IMR-90 (cell line): ENCODE measurements at regions of chr1 and their contacts with region 1.

Region 1: DNA sequence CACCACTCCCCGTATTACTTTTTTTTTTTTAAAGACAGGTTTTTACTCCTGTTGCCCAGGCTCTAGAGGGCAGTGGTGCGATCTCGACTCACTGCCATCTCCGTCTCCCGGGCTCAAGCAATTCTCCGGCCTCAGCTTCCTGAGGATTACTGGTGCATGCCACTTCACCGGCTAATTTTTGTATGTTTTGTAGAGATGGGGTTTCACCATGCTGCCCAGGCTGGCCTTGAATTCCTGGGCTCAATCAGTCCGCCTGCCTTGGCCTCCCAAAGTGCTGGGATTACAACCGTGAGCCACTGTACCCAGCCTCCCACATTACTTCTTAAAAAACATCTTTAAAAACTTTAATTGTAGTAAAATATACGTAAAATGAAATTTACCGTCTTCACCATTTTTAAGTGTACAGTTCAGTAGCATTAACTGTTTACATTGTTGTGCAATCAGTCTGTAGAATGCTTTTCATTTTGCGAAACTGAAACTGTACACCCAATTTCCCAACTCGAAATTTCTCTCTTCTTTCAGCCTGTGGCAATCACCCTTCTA is 77.0 kb downstream of the ZMYM4 start:
- DNase-seq: peak; percentile 40
- ATAC-seq: no peak
- H3K4me3 ChIP-seq: no peak overlapping the region
- H3K27ac ChIP-seq: no peak overlapping the region
- H3K4me1 ChIP-seq: no peaks in the 10 kb centered on the region
- H3K27me3 ChIP-seq: no peaks in the 10 kb centered on the region
- CTCF ChIP-seq: no peak
- POLR2A ChIP-seq: no peak
- RAD21 ChIP-seq: no peak

Region 2: GRCh38 chr1:35215346-35215745 is 130.2 kb before region 1 on chr1:
- CTCF ChIA-PET with region 1: no interaction called
- POLR2A ChIA-PET with region 1: no interaction called
- dilution Hi-C with region 1: no loop called
- in situ Hi-C with region 1: no loop called
- intact Hi-C with region 1: loop called (anchors 5 kb)
- DNase-seq: no peak
- ATAC-seq: no peak
- H3K4me3 ChIP-seq: no peak overlapping the region
- H3K27ac ChIP-seq: no peak overlapping the region
- H3K4me1 ChIP-seq: no peaks in the 10 kb centered on the region; the same call in 1 of the 2 replicates
- H3K27me3 ChIP-seq: no peaks in the 10 kb centered on the region
- CTCF ChIP-seq: no peak
- POLR2A ChIP-seq: no peak
- RAD21 ChIP-seq: no peak

Region 3: GRCh38 chr1:35268282-35269200 is 77.0 kb before region 1 on chr1 and contains the start of gene ZMYM4:
- CTCF ChIA-PET with region 1: no interaction called
- POLR2A ChIA-PET with region 1: interaction called, 12 read pairs
- dilution Hi-C with region 1: no loop called
- in situ Hi-C with region 1: no loop called
- intact Hi-C with region 1: no loop called
- DNase-seq: peak; percentile 99
- ATAC-seq: peak; percentile 95
- H3K4me3 ChIP-seq: peak within 1 kb of the TSS; percentile 84
- H3K27ac ChIP-seq: peak within 1 kb of the TSS; percentile 88
- H3K4me1 ChIP-seq: no peaks in the 10 kb centered on the region; the same call in none of the 2 replicates
- H3K27me3 ChIP-seq: no peaks in the 10 kb centered on the region
- CTCF ChIP-seq: peak; percentile 8; the same call in 1 of the 2 replicates
- POLR2A ChIP-seq: peak; percentile 77
- RAD21 ChIP-seq: no peak
- total RNA-seq, gene ZMYM4: 53.8 and 56.9 TPM in 2 replicates

Region 4: DNA sequence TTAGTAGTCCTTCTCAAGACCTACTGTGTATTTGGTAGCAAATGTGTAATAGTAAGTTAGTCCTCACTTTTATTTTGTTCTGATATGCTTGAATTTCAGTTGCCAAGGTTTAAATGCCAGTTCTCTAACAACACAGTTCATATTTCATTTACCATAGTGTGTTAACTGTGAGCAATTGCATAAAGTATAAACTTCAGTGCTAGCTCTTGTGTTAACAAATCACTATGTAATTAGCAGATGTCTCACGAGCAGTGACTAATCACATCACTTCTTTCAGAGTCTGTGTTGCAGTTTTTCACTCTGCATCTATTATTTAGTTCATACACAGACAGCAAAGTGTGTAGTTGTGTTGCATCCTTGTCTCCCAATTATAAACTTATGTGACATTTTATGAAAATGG is 29.2 kb before region 1 on chr1:
- CTCF ChIA-PET with region 1: no interaction called
- POLR2A ChIA-PET with region 1: no interaction called
- dilution Hi-C with region 1: no loop called
- in situ Hi-C with region 1: no loop called
- intact Hi-C with region 1: no loop called
- DNase-seq: peak; percentile 4
- ATAC-seq: peak; percentile 14; the same call in 1 of the 2 replicates
- H3K4me3 ChIP-seq: no peak overlapping the region
- H3K27ac ChIP-seq: no peak overlapping the region
- H3K4me1 ChIP-seq: no peaks in the 10 kb centered on the region
- H3K27me3 ChIP-seq: no peaks in the 10 kb centered on the region
- CTCF ChIP-seq: no peak
- POLR2A ChIP-seq: no peak
- RAD21 ChIP-seq: no peak

Region 5: DNA sequence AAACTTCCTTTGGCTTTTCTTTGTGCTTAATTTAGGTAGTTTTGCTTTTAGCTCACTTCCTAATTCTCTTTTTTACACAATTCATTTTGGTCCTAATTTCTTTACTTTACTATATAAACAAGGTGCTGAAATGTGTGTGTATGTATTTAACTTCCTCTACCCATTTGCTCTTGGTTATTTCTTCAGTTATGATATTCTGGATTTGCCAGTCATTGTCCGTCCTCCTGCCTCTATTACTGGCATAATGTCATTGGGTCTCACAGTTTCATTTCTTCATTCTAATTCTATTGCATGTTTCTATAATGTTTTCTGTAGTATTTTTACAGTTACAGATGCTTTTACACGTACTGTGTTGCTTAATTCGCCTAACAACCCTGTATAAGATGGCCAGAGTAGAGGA is 19.2 kb after region 1 on chr1:
- CTCF ChIA-PET with region 1: no interaction called
- POLR2A ChIA-PET with region 1: no interaction called
- dilution Hi-C with region 1: no loop called
- in situ Hi-C with region 1: no loop called
- intact Hi-C with region 1: no loop called
- DNase-seq: no peak
- ATAC-seq: no peak
- H3K4me3 ChIP-seq: no peak overlapping the region
- H3K27ac ChIP-seq: no peak overlapping the region
- H3K4me1 ChIP-seq: no peaks in the 10 kb centered on the region; the same call in 1 of the 2 replicates
- H3K27me3 ChIP-seq: no peaks in the 10 kb centered on the region
- CTCF ChIP-seq: no peak
- POLR2A ChIP-seq: no peak
- RAD21 ChIP-seq: no peak

Region 6: DNA sequence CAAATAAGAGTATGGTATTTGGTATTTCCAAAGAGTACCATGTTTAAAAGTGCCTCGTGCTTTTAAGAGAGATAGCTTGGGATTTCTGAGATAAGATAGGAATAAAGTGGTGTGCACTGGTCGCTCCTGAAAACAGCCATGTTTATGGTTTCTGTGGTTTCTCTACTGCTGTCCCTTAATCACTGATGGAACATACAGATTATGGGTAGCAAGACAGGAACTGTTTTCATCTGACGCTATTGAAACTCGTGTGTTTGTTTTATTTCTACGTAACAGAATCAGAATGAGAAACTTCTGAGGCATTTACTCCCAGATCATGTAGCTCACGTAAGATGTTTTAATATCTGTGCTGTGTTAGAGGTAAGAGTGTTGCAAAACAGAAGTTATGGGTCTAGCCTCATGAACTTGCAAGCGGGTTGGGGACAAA is 85.7 kb after region 1 on chr1:
- CTCF ChIA-PET with region 1: no interaction called
- POLR2A ChIA-PET with region 1: no interaction called
- dilution Hi-C with region 1: no loop called
- in situ Hi-C with region 1: no loop called
- intact Hi-C with region 1: no loop called
- DNase-seq: peak; percentile 74
- ATAC-seq: peak; percentile 62
- H3K4me3 ChIP-seq: no peak overlapping the region
- H3K27ac ChIP-seq: no peak overlapping the region
- H3K4me1 ChIP-seq: peaks cover 2% of the 10 kb centered on the region; the same call in 1 of the 2 replicates
- H3K27me3 ChIP-seq: no peaks in the 10 kb centered on the region
- CTCF ChIP-seq: no peak
- POLR2A ChIP-seq: no peak
- RAD21 ChIP-seq: no peak